Activated naive CD4-positive, alpha-beta T cell treated with anti-CD3 and anti-CD28 coated beads for 36 hours (primary cell): ENCODE measurements at regions of chr13 and their contacts with region 1.

Region 1: DNA sequence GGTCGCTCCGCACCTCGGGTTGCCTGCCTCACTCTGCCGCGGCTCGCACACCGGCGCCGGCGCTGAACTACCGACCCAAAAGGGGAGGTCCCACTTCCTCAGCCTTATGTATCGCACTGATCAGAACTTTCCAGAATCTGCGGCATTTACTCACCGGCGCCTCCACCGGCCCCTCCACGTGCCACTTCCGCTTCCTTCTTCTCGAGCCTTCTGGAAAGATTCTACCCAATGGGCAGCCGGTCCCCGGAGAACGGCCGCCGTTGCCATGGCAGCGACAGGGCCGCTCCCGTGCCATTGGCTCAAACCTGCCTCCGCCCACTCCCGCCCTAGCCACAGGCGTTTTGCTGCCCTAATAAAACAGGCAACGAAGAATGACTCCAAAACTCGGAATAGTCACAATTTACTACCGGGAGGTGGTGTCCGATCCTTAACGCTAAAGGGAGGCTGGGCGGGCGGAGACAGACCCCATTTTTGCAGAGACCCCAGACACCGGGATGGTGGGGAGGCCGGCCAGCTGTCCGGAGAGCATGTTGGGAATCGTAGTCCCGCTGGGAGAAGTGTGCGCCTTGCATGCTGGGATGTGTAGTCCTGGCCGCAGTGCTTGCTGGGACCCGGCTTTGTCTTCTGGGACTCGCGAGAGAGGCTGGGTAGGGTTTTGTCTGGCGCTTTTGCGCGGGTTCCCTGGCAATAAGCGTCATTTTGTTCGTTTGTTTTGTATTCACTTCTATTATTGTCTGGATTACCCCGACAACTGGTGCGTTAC is at the start of gene HSPH1:
- DNase-seq: peak; percentile 99
- H3K4me3 Mint-ChIP-seq: peak within 1 kb of the TSS; percentile 96
- H3K27ac Mint-ChIP-seq: peak within 1 kb of the TSS; percentile 98
- H3K4me1 Mint-ChIP-seq: peaks cover 27% of the 10 kb centered on the region
- H3K27me3 Mint-ChIP-seq: no peaks in the 10 kb centered on the region
- total RNA-seq, gene HSPH1: 122 to 150 TPM

Region 2: DNA sequence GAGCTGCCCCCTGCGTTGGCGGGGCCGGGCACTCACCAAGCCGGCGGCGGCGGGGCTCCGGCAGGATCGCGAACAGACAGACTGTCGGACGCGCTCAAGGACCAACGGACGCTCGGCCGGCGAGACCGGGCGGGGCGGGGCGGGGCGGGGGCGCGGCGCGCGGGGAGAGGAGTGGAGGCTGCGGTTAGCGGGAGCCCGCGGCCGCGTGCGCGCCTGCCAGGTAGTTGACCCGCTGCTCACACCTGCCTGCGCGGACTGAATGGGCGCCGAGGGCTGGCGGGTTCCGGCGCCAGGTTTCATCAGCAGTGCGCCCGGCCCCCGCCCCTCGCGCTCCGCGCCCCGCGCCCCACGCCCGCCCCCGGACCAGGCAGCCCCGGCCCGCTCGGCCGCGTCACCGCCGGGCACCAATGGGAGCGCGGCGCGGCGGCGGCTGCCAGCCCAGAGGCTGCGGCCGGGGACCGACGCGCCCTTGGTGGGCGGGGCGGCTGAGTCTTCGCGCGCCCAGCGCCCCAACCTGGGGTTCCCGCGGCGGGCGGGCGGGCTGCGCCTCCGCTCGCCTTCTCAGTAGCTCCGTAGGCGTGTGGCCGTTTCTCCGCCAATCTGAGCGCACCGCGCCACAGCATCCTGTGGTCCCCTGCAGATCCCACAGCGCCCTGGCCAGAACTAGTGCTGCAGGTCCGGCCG is 1566.5 kb before region 1 on chr13 and contains the start of gene SLC7A1:
- CTCF ChIA-PET with region 1: no interaction called
- intact Hi-C with region 1: loop called (anchors 1 kb)
- DNase-seq: peak; percentile 84
- H3K4me3 Mint-ChIP-seq: peak within 1 kb of the TSS; percentile 90
- H3K27ac Mint-ChIP-seq: peak within 1 kb of the TSS; percentile 95
- H3K4me1 Mint-ChIP-seq: peaks cover 39% of the 10 kb centered on the region
- H3K27me3 Mint-ChIP-seq: no peaks in the 10 kb centered on the region
- total RNA-seq, gene SLC7A1: 115 to 119 TPM

Region 3: GRCh38 chr13:30306762-30307193 is 855.2 kb before region 1 on chr13:
- CTCF ChIA-PET with region 1: no interaction called
- intact Hi-C with region 1: loop called (anchors 5 kb)
- DNase-seq: peak; percentile 94
- H3K4me3 Mint-ChIP-seq: peak overlapping the region; percentile 83
- H3K27ac Mint-ChIP-seq: peak overlapping the region; percentile 76
- H3K4me1 Mint-ChIP-seq: peaks cover 14% of the 10 kb centered on the region
- H3K27me3 Mint-ChIP-seq: no peaks in the 10 kb centered on the region

Region 4: GRCh38 chr13:30984620-30985019 is 177.4 kb before region 1 on chr13:
- CTCF ChIA-PET with region 1: no interaction called
- intact Hi-C with region 1: loop called (anchors 5 kb)
- DNase-seq: no peak
- H3K4me3 Mint-ChIP-seq: no peak overlapping the region
- H3K27ac Mint-ChIP-seq: no peak overlapping the region
- H3K4me1 Mint-ChIP-seq: no peaks in the 10 kb centered on the region
- H3K27me3 Mint-ChIP-seq: no peaks in the 10 kb centered on the region

Region 5: GRCh38 chr13:31145417-31145816 is 16.6 kb before region 1 on chr13:
- CTCF ChIA-PET with region 1: interaction called, 4 read pairs
- intact Hi-C with region 1: loop called (anchors 2 kb)
- DNase-seq: no peak
- H3K4me3 Mint-ChIP-seq: no peak overlapping the region
- H3K27ac Mint-ChIP-seq: no peak overlapping the region
- H3K4me1 Mint-ChIP-seq: peaks cover 10% of the 10 kb centered on the region
- H3K27me3 Mint-ChIP-seq: no peaks in the 10 kb centered on the region

Region 6: GRCh38 chr13:31192306-31192705 is 30.3 kb after region 1 on chr13:
- CTCF ChIA-PET with region 1: no interaction called
- intact Hi-C with region 1: no loop called
- DNase-seq: no peak
- H3K4me3 Mint-ChIP-seq: no peak overlapping the region
- H3K27ac Mint-ChIP-seq: no peak overlapping the region
- H3K4me1 Mint-ChIP-seq: no peaks in the 10 kb centered on the region
- H3K27me3 Mint-ChIP-seq: peaks cover 7% of the 10 kb centered on the region

Region 7: DNA sequence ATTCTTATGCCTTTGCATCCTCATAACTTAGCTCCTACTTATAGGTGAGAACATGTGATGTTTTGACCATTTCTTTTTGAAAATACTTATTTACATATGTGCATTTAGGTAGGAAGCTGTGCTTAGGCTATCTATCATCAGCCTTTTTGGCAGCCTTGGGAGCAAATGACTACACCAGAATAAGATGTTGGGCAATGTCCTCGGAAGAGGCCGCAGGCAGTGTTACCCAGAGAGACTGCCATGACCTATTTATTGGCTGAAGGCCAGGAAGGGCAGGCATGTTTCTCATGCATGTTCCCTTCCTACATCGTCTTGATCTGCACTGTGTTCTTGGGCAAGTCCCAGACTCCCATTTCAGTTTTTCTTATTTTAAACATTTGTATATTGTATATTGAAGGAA is 160.0 kb after region 1 on chr13:
- CTCF ChIA-PET with region 1: no interaction called
- intact Hi-C with region 1: no loop called
- DNase-seq: no peak
- H3K4me3 Mint-ChIP-seq: no peak overlapping the region
- H3K27ac Mint-ChIP-seq: no peak overlapping the region
- H3K4me1 Mint-ChIP-seq: no peaks in the 10 kb centered on the region
- H3K27me3 Mint-ChIP-seq: no peaks in the 10 kb centered on the region

Region 8: GRCh38 chr13:32315238-32316027 is 1153.4 kb after region 1 on chr13 and contains the starts of genes BRCA2 and ZAR1L:
- CTCF ChIA-PET with region 1: no interaction called
- intact Hi-C with region 1: loop called (anchors 1 kb)
- DNase-seq: peak; percentile 91
- H3K4me3 Mint-ChIP-seq: peak within 1 kb of the TSS; percentile 92
- H3K27ac Mint-ChIP-seq: peak within 1 kb of the TSS; percentile 98
- H3K4me1 Mint-ChIP-seq: peaks cover 12% of the 10 kb centered on the region
- H3K27me3 Mint-ChIP-seq: no peaks in the 10 kb centered on the region
- total RNA-seq, gene BRCA2: 17.3 to 21.3 TPM
- total RNA-seq, gene ZAR1L: not detected

Region 9: GRCh38 chr13:32737111-32737571 is 1575.1 kb after region 1 on chr13:
- CTCF ChIA-PET with region 1: no interaction called
- intact Hi-C with region 1: loop called (anchors 2 kb)
- DNase-seq: no peak
- H3K4me3 Mint-ChIP-seq: peak overlapping the region; percentile 71
- H3K27ac Mint-ChIP-seq: peak overlapping the region; percentile 81
- H3K4me1 Mint-ChIP-seq: peaks cover 42% of the 10 kb centered on the region
- H3K27me3 Mint-ChIP-seq: no peaks in the 10 kb centered on the region